Calu3 (cell line): ENCODE measurements at regions of chr11 and their contacts with region 1.

Region 1: DNA sequence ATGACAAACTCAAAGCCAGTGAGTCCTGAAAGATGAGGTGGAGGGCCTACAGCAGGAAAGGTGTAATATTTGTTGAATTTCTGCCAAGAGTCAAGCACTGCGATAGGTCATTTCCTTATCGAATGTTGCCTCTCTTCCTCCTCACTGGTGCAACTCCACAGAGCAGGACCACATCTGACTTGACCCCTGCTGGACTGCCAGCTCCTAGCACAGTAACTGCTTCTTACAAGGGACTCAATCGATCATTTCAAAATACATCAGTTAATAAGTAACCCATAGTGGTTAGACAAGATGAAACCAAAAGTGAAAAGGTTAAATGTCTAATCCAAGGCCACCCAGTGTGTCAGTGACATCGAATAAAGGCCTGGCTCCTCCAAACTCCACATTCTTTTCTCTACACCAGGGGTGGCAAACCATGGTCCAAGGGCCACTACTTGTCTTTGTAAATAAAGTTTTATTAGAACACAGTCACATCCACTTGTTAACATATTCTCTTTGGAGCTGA is 98.5 kb upstream of the CSNK2A3 start:
- DNase-seq: peak; percentile 77
- H3K4me3 Mint-ChIP-seq: no peak overlapping the region
- H3K27ac Mint-ChIP-seq: peak overlapping the region; percentile 84
- H3K4me1 Mint-ChIP-seq: peaks cover 52% of the 10 kb centered on the region
- H3K27me3 Mint-ChIP-seq: peaks cover 29% of the 10 kb centered on the region
- CTCF ChIP-seq: peak; percentile 52

Region 2: GRCh38 chr11:10770626-10771254 is 680.8 kb before region 1 on chr11:
- CTCF ChIA-PET with region 1: no interaction called
- intact Hi-C with region 1: loop called (anchors 5 kb)
- DNase-seq: peak; percentile 67
- H3K4me3 Mint-ChIP-seq: no peak overlapping the region
- H3K27ac Mint-ChIP-seq: no peak overlapping the region
- H3K4me1 Mint-ChIP-seq: no peaks in the 10 kb centered on the region
- H3K27me3 Mint-ChIP-seq: no peaks in the 10 kb centered on the region
- CTCF ChIP-seq: peak; percentile 59

Region 3: DNA sequence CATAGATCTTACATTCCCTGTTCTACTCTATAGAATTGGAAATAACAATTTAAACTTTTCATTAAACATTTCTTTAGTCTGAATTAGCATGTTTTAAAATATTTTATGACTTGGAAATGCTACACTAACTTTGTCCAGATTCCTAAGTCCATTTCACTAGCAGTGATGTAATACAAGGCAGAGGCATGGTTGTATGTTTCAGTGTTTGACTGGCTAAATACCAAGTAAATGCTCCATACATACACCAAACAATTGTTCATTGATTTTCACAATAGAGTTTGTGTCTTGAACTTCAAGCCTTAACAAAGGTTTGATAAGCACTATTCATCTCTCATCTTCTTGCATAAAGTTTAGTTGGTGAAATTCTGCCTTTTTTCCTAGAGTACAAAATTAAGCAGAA is 607.2 kb before region 1 on chr11:
- CTCF ChIA-PET with region 1: no interaction called
- intact Hi-C with region 1: no loop called
- DNase-seq: no peak
- H3K4me3 Mint-ChIP-seq: no peak overlapping the region
- H3K27ac Mint-ChIP-seq: no peak overlapping the region
- H3K4me1 Mint-ChIP-seq: peaks cover 22% of the 10 kb centered on the region
- H3K27me3 Mint-ChIP-seq: no peaks in the 10 kb centered on the region
- CTCF ChIP-seq: no peak

Region 4: GRCh38 chr11:11391796-11392195 is 59.8 kb before region 1 on chr11:
- CTCF ChIA-PET with region 1: no interaction called
- intact Hi-C with region 1: loop called (anchors 5 kb)
- DNase-seq: peak; percentile 60
- H3K4me3 Mint-ChIP-seq: no peak overlapping the region
- H3K27ac Mint-ChIP-seq: peak overlapping the region; percentile 10
- H3K4me1 Mint-ChIP-seq: peaks cover 48% of the 10 kb centered on the region
- H3K27me3 Mint-ChIP-seq: no peaks in the 10 kb centered on the region
- CTCF ChIP-seq: no peak